Activated T-helper 1 cell treated with anti-CD3 and anti-CD28 coated beads, Interleukin-12 subunit alpha, Interleukin-12 subunit beta, Interleukin-2, Interleukin-4 antibody, amounts not matched to agents 30 ng/mL and 10 ng/mL and 1 ng/mL, durations not matched to agents 14 hours and 24 hours and 36 hours (primary cell): ENCODE measurements at regions of chr3 and their contacts with region 1.

Region 1: GRCh38 chr3:67384760-67385397 is 269.5 kb downstream of the SUCLG2 start:
- DNase-seq: no peak
- H3K4me3 Mint-ChIP-seq: no peak overlapping the region
- H3K27ac Mint-ChIP-seq: no peak overlapping the region
- H3K4me1 Mint-ChIP-seq: peaks cover 25% of the 10 kb centered on the region
- H3K27me3 Mint-ChIP-seq: no peaks in the 10 kb centered on the region

Region 2: GRCh38 chr3:67433109-67433508 is 48.2 kb after region 1 on chr3:
- intact Hi-C with region 1: no loop called
- DNase-seq: no peak
- H3K4me3 Mint-ChIP-seq: no peak overlapping the region
- H3K27ac Mint-ChIP-seq: no peak overlapping the region
- H3K4me1 Mint-ChIP-seq: no peaks in the 10 kb centered on the region
- H3K27me3 Mint-ChIP-seq: no peaks in the 10 kb centered on the region

Region 3: DNA sequence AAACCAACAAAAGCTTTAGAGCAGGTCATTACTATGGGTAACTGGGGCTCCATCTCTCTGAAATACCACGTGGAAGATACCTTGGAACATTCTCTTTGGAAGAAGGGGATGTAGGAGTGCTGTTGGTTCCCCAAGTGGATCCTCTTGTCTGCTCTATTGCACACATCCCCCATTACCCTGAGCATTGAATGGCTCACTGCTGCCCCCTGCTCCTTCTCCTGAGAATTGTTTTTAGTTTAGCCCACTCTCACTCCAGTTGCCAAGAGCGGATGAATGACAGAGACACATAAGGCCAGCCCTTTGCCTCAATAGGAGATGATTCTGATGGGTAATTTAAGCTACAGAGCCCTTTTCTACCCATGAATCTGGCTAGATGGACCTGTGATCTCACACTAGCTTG is 405.2 kb after region 1 on chr3:
- intact Hi-C with region 1: loop called (anchors 1 kb)
- DNase-seq: peak; percentile 33
- H3K4me3 Mint-ChIP-seq: no peak overlapping the region
- H3K27ac Mint-ChIP-seq: no peak overlapping the region
- H3K4me1 Mint-ChIP-seq: no peaks in the 10 kb centered on the region
- H3K27me3 Mint-ChIP-seq: no peaks in the 10 kb centered on the region

Region 4: GRCh38 chr3:68256635-68257223 is 871.9 kb after region 1 on chr3:
- intact Hi-C with region 1: loop called (anchors 5 kb)
- DNase-seq: no peak
- H3K4me3 Mint-ChIP-seq: no peak overlapping the region
- H3K27ac Mint-ChIP-seq: no peak overlapping the region
- H3K4me1 Mint-ChIP-seq: no peaks in the 10 kb centered on the region
- H3K27me3 Mint-ChIP-seq: no peaks in the 10 kb centered on the region